Mammary epithelial cell (primary cell): ENCODE measurements at regions of chr11 and their contacts with region 1.

Region 1: DNA sequence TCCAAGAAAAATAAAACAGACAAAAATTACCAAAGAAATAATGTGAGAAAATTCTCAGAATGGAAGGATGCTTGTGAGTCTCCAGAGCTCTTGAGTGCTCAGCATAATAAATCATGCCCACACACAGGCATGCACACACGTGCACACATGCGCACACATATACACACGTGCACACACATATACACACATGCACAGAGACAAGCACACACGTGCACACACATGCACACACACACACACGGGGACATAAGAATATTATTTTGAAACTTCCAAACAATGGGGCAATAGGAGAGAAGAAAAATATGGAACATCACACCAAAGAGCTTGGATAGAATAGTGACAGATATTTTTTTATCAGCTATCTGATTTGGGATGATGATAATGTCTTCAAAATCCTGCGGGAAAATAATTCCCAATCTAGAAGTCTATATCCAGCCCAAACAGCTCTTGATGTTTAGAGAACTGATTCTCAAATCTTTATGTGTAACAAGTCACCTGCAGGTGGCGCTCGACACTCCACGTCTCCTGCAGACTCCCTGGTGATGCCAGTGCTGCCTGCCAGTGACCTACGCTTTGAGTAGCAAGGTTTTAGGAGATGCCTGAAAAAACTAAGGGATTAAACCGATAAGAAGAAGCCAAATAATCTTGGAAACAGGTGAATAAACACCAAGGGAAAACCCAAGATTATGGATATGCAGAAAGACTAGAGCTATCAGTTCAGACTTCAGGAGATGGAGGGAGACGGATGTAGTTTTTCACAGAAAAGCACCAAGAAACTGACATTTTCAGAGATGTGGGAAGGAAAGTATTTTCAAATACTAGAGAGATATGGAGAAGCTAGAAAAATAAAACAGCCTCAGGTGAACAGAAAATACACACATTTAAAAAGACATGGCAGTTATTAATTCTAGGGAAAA is 743.6 kb downstream of the ETS1 start:
- DNase-seq: peak; percentile 64
- H3K4me3 ChIP-seq: no peak overlapping the region
- H3K27ac ChIP-seq: no peak overlapping the region
- H3K4me1 ChIP-seq: peaks cover 12% of the 10 kb centered on the region
- H3K27me3 ChIP-seq: no peaks in the 10 kb centered on the region
- CTCF ChIP-seq: peak; percentile 80 to 82

Region 2: DNA sequence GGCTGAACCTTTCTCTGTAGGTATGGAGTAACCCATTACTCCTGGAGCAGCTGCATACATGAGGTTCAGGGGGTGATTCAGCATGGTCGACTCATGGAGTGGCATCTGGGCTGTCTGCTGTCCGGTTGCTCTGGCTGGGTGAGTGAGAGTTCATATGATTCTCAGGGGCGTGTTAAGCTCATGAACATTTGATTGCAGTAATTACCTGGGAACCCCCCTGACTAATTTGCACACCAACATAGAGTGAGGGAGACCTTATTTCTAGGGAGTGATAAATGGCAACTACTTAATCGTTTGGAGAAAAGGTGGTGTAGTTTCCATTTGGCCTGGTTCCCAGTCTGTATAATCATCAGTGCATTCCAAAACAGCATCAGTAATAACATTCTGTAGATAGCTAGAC is 81.7 kb after region 1 on chr11:
- CTCF ChIA-PET with region 1: interaction called, 3 read pairs
- dilution Hi-C with region 1: no loop called
- in situ Hi-C with region 1: no loop called
- intact Hi-C with region 1: loop called (anchors 5 kb)
- DNase-seq: peak; percentile 93
- H3K4me3 ChIP-seq: no peak overlapping the region
- H3K27ac ChIP-seq: peak overlapping the region; percentile 56
- H3K4me1 ChIP-seq: peaks cover 17% of the 10 kb centered on the region
- H3K27me3 ChIP-seq: no peaks in the 10 kb centered on the region
- CTCF ChIP-seq: no peak

Region 3: DNA sequence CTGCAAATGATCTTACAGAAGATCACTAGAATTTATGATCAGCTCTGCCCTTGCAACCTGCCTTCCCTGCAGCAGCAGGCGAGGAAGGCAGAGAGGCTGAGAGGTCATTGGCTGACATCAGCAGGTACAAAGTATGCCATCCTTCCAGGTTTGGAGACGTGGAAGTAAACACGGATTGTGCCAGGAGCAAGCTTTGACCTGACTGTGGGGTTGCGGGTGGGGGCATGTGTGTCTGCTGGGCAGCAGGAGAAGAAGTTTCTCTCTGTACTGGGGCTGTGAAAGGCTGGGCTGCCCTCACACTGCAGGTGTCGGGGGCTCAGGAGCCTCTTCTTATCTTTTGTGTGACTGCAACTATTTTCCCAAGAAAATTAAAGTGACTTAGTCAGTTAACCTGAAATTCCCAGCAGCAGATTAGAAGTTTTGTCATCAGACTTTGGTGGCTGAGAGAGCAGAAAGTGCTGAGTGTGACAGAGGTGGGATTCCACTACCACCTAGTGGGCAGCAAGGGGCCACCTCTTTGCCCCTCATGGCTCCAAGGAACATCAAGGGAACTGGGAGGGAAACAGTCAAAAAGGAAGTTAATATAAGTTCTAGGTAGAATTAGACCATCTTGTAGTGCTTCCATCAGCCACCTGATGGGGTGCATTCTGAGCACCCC is 177.7 kb after region 1 on chr11:
- CTCF ChIA-PET with region 1: interaction called, 5 read pairs
- dilution Hi-C with region 1: no loop called
- in situ Hi-C with region 1: loop called in 1 of 2 experiments (anchors 10 kb)
- intact Hi-C with region 1: loop called (anchors 1 kb)
- DNase-seq: no peak
- H3K4me3 ChIP-seq: no peak overlapping the region
- H3K27ac ChIP-seq: no peak overlapping the region
- H3K4me1 ChIP-seq: peaks cover 27% of the 10 kb centered on the region
- H3K27me3 ChIP-seq: no peaks in the 10 kb centered on the region
- CTCF ChIP-seq: peak; percentile 23 to 50